Calu3 (cell line): ENCODE measurements at regions of chr14 and their contacts with region 1.

Region 1: GRCh38 chr14:53441789-53442188 is 288.7 kb upstream of the DDHD1 start:
- DNase-seq: no peak
- H3K4me3 Mint-ChIP-seq: no peak overlapping the region
- H3K27ac Mint-ChIP-seq: no peak overlapping the region
- H3K4me1 Mint-ChIP-seq: no peaks in the 10 kb centered on the region
- H3K27me3 Mint-ChIP-seq: peaks cover 40% of the 10 kb centered on the region
- CTCF ChIP-seq: no peak

Region 2: GRCh38 chr14:53412803-53413675 is 28.8 kb before region 1 on chr14:
- CTCF ChIA-PET with region 1: no interaction called
- intact Hi-C with region 1: loop called (anchors 1 kb)
- DNase-seq: peak; percentile 4
- H3K4me3 Mint-ChIP-seq: no peak overlapping the region
- H3K27ac Mint-ChIP-seq: no peak overlapping the region
- H3K4me1 Mint-ChIP-seq: no peaks in the 10 kb centered on the region
- H3K27me3 Mint-ChIP-seq: peaks cover 7% of the 10 kb centered on the region
- CTCF ChIP-seq: no peak